ENCODE measurements at regions of chr11 and their contacts with region 1.

Region 1: GRCh38 chr11:73335204-73335923 is 27.3 kb downstream of the ARHGEF17 start:
- DNase-seq: peak; percentile 90
- H3K4me3 Mint-ChIP-seq: no peak overlapping the region
- H3K27ac Mint-ChIP-seq: no peak overlapping the region
- H3K4me1 Mint-ChIP-seq: peaks cover 15% of the 10 kb centered on the region
- H3K27me3 Mint-ChIP-seq: no peaks in the 10 kb centered on the region
- CTCF ChIP-seq: peak; percentile 93

Region 2: GRCh38 chr11:73295231-73295995 is 40.0 kb before region 1 on chr11:
- CTCF ChIA-PET with region 1: interaction called, 4 read pairs
- intact Hi-C with region 1: loop called (anchors 2 kb)
- DNase-seq: peak; percentile 83
- H3K4me3 Mint-ChIP-seq: no peak overlapping the region
- H3K27ac Mint-ChIP-seq: no peak overlapping the region
- H3K4me1 Mint-ChIP-seq: no peaks in the 10 kb centered on the region
- H3K27me3 Mint-ChIP-seq: peaks cover 34% of the 10 kb centered on the region
- CTCF ChIP-seq: peak; percentile 93

Region 3: DNA sequence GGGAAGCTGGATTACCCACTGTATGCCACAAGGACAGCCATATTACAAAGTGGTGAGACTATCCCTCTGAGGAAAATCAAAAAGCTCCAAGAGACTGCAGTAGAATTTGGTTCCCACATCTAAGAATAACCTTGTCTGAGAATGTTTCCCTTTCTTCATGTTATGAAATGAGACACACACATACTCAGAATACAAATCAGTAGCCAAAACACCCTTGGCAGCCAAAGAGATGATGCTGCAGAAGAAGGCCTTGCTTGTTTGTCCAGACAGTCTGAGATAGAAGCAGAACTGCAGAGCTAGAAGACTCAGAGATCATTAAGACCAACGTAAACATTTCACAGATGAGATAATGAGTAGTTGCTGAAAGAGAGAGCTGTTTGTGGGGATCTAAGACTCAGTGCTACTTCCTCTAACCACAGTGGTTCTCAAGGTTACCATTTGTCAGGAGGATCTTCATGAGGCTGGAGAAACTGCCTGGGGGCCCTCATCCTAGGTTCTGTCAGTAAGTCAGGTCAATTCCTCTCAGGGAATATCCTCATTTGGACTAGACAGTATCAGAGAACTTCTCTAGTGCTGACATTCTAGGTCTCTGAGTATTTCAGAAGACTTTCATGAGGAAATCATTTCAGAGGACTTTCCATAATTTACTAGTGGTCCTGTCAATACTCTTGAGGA is 79.8 kb after region 1 on chr11:
- CTCF ChIA-PET with region 1: no interaction called
- intact Hi-C with region 1: no loop called
- DNase-seq: no peak
- H3K4me3 Mint-ChIP-seq: no peak overlapping the region
- H3K27ac Mint-ChIP-seq: no peak overlapping the region
- H3K4me1 Mint-ChIP-seq: no peaks in the 10 kb centered on the region
- H3K27me3 Mint-ChIP-seq: no peaks in the 10 kb centered on the region
- CTCF ChIP-seq: no peak